GM12878 (cell line): ENCODE measurements at regions of chr20 and their contacts with region 1.

Region 1: DNA sequence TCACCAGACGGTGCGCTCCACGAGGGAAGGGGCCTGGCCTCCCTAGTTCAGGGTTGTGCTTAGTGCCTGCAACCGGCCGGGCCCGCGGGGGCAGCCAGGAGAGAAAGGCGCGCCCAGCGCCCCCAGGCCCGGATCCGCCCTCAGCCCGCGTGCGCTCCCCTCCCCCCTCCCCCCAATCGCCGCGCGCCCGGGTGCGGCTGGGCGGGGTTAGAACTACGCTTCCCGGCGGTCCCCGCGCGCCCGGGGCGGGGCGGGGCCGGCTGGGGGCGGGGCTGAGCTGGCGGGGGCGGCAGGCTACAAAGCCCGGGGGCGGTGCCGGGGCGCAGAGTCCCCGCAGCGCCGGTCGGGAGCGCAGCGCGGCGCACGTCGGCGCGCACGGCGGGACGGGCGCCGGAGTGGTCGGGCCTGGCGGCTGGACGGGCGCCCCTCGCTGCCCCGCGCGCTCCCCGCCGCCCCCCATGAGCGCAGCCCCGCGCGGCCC is at the start of gene RBM38:
- DNase-seq: no peak
- ATAC-seq: peak; percentile 48
- H3K4me3 ChIP-seq: peak within 1 kb of the TSS; percentile 94
- H3K27ac ChIP-seq: peak within 1 kb of the TSS; percentile 97
- H3K4me1 ChIP-seq: peaks cover 37% of the 10 kb centered on the region
- H3K27me3 ChIP-seq: no peaks in the 10 kb centered on the region
- CTCF ChIP-seq: no peak
- EP300 ChIP-seq: no peak
- POLR2A ChIP-seq: peak; percentile 55
- RAD21 ChIP-seq: no peak
- polyA plus RNA-seq, gene RBM38: 0.32 to 1.3 TPM

Region 2: GRCh38 chr20:57335392-57335791 is 55.7 kb before region 1 on chr20:
- CTCF ChIA-PET with region 1: no interaction called
- POLR2A ChIA-PET with region 1: no interaction called
- RAD21 ChIA-PET with region 1: no interaction called
- SMC1A ChIA-PET with region 1: no interaction called
- in situ Hi-C with region 1: no loop called
- intact Hi-C with region 1: no loop called
- DNase-seq: no peak
- ATAC-seq: no peak
- H3K4me3 ChIP-seq: no peak overlapping the region
- H3K27ac ChIP-seq: no peak overlapping the region
- H3K4me1 ChIP-seq: no peaks in the 10 kb centered on the region
- H3K27me3 ChIP-seq: peaks cover 0 to 3% of the 10 kb centered on the region in 2 experiments; a peak in 1 of 4 replicates
- CTCF ChIP-seq: no peak; a peak in 1 of 6 replicates
- EP300 ChIP-seq: no peak
- POLR2A ChIP-seq: no peak
- RAD21 ChIP-seq: no peak

Region 3: DNA sequence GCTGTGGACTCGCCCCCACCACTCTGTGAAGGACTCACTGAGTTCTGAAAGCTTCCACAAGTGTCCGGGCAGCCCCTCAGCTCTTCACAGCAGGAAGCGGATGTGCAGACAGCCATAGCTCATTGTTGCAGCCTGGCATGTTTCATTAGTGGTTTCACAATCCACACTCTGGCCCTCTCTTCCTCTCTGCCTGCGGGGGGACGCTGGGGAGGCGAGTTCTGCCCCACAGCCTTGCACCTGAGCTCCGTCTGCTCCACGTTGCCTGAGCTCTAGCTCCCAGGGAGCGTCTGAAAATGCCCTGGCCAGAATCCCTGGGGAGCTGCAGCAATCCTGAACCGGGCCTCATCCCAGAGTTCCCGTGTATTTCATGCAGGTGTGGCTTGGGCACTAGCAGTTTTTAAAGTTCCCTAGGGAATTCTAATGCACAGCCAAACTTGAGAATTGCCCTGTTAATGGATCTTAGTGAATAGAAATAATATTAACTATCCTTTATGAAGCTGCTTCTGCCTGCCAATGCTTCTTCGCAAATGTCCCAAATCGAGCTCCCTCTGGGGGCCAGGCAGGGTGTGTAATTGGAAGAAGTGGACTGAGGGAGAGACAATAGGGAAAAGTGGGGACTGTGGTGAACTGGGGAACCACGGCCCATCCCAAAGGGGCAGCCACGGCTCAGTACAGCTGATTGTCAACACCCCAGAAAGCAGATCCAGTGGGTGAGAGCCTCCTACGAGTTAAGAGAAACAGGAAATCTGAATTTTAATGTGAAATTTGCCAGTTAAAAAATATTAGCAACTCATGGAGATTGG is 82.3 kb after region 1 on chr20:
- CTCF ChIA-PET with region 1: interaction called, 10 read pairs
- POLR2A ChIA-PET with region 1: interaction called, 15 read pairs
- RAD21 ChIA-PET with region 1: interaction called, 13 read pairs
- SMC1A ChIA-PET with region 1: interaction called, 7 read pairs
- in situ Hi-C with region 1: no loop called
- intact Hi-C with region 1: no loop called
- DNase-seq: peak; percentile 68
- ATAC-seq: peak; percentile 82
- H3K4me3 ChIP-seq: no peak overlapping the region
- H3K27ac ChIP-seq: peak overlapping the region; percentile 43
- H3K4me1 ChIP-seq: peaks cover 64% of the 10 kb centered on the region
- H3K27me3 ChIP-seq: no peaks in the 10 kb centered on the region
- CTCF ChIP-seq: 0 out of 6 replicates have a peak, but pooled peaks of 2 of the 3 experiments have one; percentile 10 to 11
- EP300 ChIP-seq: no peak
- POLR2A ChIP-seq: 0 out of 2 replicates have a peak, but pooled peaks have one; percentile 28
- RAD21 ChIP-seq: peak; percentile 3; the same call in 1 of the 2 replicates

Region 4: GRCh38 chr20:57493091-57493615 is 102.0 kb after region 1 on chr20:
- CTCF ChIA-PET with region 1: interaction called, 25 read pairs
- POLR2A ChIA-PET with region 1: interaction called, 12 read pairs
- RAD21 ChIA-PET with region 1: interaction called, 20 read pairs
- SMC1A ChIA-PET with region 1: interaction called, 20 read pairs
- in situ Hi-C with region 1: no loop called
- intact Hi-C with region 1: no loop called
- DNase-seq: no peak
- ATAC-seq: no peak
- H3K4me3 ChIP-seq: no peak overlapping the region
- H3K27ac ChIP-seq: no peak overlapping the region
- H3K4me1 ChIP-seq: no peaks in the 10 kb centered on the region
- H3K27me3 ChIP-seq: peaks cover 0 to 2% of the 10 kb centered on the region in 2 experiments; a peak in 1 of 4 replicates
- CTCF ChIP-seq: no peak
- EP300 ChIP-seq: no peak
- POLR2A ChIP-seq: no peak
- RAD21 ChIP-seq: no peak

Region 5: GRCh38 chr20:57680131-57680716 is 289.1 kb after region 1 on chr20:
- CTCF ChIA-PET with region 1: interaction called, 3 read pairs
- POLR2A ChIA-PET with region 1: no interaction called
- RAD21 ChIA-PET with region 1: no interaction called
- SMC1A ChIA-PET with region 1: no interaction called
- in situ Hi-C with region 1: loop called (anchors 10 kb)
- intact Hi-C with region 1: loop called (anchors 10 kb)
- DNase-seq: peak; percentile 86
- ATAC-seq: peak; percentile 77
- H3K4me3 ChIP-seq: peak overlapping the region; percentile 19; the same call in 1 of the 2 replicates
- H3K27ac ChIP-seq: peak overlapping the region; percentile 80
- H3K4me1 ChIP-seq: peaks cover 66% of the 10 kb centered on the region
- H3K27me3 ChIP-seq: no peaks in the 10 kb centered on the region
- CTCF ChIP-seq: no peak
- EP300 ChIP-seq: peak; percentile 94 to 95
- POLR2A ChIP-seq: no peak
- RAD21 ChIP-seq: no peak

Region 6: DNA sequence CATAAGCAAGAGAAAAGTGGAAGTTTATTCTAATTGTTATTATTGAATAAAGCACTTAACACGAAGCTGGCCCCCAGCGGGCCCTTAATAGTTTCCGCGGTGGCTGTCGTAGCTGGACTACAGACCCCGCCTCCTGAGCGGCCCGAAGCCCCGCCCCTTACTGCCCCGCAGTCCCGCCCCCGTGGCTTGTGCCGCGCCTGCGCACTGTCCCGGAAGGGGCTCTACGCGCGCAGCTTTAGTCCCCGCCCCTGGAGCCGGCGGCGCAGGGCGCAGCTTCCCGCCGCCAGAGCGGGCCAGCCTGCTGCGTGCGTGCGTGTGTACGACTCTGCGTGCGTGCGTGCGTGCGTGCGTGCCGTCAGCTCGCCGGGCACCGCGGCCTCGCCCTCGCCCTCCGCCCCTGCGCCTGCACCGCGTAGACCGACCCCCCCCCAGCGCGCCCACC is 997.8 kb after region 1 on chr20 and contains the start of gene VAPB:
- CTCF ChIA-PET with region 1: no interaction called
- POLR2A ChIA-PET with region 1: no interaction called
- RAD21 ChIA-PET with region 1: no interaction called
- SMC1A ChIA-PET with region 1: no interaction called
- in situ Hi-C with region 1: loop called (anchors 10 kb)
- intact Hi-C with region 1: no loop called
- DNase-seq: peak; percentile 88
- ATAC-seq: peak; percentile 98
- H3K4me3 ChIP-seq: peak within 1 kb of the TSS; percentile 81
- H3K27ac ChIP-seq: peak within 1 kb of the TSS; percentile 91
- H3K4me1 ChIP-seq: peaks cover 13% of the 10 kb centered on the region
- H3K27me3 ChIP-seq: no peaks in the 10 kb centered on the region
- CTCF ChIP-seq: no peak
- EP300 ChIP-seq: no peak
- POLR2A ChIP-seq: peak; percentile 87
- RAD21 ChIP-seq: no peak
- polyA plus RNA-seq, gene VAPB: 3.2 to 10.7 TPM